Heart left ventricle (tissue), 16 donors: ENCODE measurements at regions of chr3 and their contacts with region 1.

Region 1: DNA sequence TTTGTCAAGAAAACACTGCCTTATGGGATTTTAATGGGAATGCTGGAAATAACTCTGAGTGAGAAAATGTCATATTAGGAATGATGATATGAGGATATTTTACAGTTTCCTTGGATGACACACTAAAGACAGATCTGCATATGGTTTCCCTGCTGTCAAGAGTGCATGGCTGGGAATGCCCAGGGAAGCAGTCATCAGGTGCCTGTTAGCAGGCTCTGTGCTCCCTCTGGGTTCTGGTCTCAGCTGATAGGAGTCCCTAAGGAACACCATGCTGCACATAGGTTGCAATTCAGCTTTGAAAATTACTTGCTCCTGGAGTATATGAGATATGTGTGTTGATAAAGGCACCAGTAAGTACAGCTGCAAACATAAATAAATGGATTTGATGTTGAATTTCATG is 1064.6 kb downstream of the TUSC7 start:
- DNase-seq: no peak
- ATAC-seq: no peak
- H3K4me3 ChIP-seq: no peak overlapping the region
- H3K27ac ChIP-seq: no peak overlapping the region
- H3K4me1 ChIP-seq: no peaks in the 10 kb centered on the region
- H3K27me3 ChIP-seq: peaks cover 0 to 3% (median 0%) of the 10 kb centered on the region in 9 donors
- CTCF ChIP-seq: no peak
- POLR2A ChIP-seq: no peak

Region 2: DNA sequence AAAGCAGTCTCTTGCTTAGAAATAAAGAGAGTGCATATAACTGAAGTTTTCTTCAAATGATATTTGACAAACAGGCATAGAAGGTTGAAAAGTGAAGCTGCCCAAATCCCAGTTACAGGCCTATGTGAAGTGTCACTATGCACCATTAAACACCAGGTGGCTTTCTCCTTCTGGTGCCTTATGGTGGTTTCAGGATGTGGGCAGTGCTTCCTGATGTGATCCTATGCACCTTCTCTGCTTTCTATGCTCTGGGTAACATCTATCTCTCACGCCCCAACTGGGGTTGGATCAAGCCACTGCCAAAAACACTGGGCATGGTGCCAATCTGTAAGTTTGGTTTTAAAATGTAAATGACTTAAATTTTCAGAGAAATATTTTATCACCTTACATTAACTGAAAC is 319.9 kb before region 1 on chr3:
- intact Hi-C with region 1: no loop called
- DNase-seq: no peak
- ATAC-seq: no peak
- H3K4me3 ChIP-seq: no peak overlapping the region
- H3K27ac ChIP-seq: no peak overlapping the region
- H3K4me1 ChIP-seq: no peaks in the 10 kb centered on the region
- H3K27me3 ChIP-seq: no peaks in the 10 kb centered on the region
- CTCF ChIP-seq: no peak
- POLR2A ChIP-seq: no peak

Region 3: DNA sequence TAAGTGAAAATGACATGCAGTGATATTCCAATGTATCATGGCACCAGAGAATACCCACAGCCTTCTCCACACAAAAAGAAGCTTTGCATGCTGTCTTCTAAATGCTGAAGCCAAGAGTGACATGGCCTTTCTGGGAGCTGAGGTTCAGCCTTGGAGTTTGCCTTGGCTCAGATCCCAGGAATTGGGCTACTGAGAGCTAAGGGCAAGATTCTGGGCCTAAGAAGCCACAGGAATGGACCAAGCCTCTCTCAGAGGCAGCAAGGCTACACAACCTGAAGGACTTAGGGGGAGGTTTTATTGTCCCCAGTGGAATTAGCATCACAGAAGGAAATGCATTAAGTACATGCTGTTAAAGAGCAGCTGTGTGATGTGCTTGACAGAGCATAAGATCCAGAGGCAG is 13.9 kb after region 1 on chr3:
- intact Hi-C with region 1: loop called in 1 of 10 experiments (anchors 2 kb)
- DNase-seq: no peak
- ATAC-seq: no peak
- H3K4me3 ChIP-seq: no peak overlapping the region
- H3K27ac ChIP-seq: no peak overlapping the region
- H3K4me1 ChIP-seq: no peaks in the 10 kb centered on the region
- H3K27me3 ChIP-seq: peaks cover 0 to 4% (median 0%) of the 10 kb centered on the region in 9 donors
- CTCF ChIP-seq: no peak
- POLR2A ChIP-seq: no peak